Right ventricle myocardium superior (tissue), 1 donor: ENCODE measurements at regions of chr1 and their contacts with region 1.

Region 1: DNA sequence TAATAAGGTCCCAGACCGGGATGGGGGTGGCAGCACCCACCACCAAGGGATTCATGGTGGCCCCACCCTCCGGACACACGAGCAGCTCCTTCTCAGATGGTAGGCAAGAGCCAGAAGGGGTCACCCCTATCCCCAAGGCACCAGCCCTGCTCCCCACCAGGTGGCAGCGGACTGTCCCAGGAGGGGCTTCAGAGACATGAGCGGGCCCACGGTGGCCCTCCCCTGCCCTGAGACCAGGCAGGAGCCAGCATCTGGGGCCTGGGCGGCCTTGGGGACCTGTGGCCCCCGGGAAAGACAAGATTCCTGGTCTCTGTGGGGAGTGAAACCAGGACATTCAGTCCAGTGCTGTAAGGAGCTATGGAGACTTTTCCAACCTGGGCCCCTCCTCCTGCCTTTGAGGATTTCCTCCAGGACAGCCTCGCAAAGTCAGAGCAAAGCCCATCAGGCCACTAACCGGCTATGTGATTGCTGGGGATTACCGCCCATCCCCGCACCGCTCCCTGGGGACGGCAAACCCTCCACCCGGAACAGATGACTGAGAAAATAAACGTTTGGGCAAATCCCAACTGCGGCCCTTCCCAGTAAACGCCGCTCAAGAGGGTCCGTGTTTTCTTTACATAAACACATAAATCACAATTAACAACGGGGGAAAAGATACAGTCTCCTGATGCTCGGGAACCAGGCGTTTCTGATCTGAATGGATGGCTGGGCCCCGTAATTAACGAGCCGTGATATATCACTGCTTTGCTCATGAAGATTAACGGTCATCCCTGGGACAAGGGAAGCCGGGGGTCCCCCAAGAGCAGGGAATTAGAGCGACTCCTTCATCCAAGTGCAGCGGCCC is 50.9 kb upstream of the ARHGEF16 start:
- DNase-seq: no peak
- ATAC-seq: no peak

Region 2: GRCh38 chr1:3283849-3284248 is 119.8 kb before region 1 on chr1:
- intact Hi-C with region 1: loop called (anchors 10 kb)
- DNase-seq: peak; percentile 68
- ATAC-seq: peak; percentile 86

Region 3: DNA sequence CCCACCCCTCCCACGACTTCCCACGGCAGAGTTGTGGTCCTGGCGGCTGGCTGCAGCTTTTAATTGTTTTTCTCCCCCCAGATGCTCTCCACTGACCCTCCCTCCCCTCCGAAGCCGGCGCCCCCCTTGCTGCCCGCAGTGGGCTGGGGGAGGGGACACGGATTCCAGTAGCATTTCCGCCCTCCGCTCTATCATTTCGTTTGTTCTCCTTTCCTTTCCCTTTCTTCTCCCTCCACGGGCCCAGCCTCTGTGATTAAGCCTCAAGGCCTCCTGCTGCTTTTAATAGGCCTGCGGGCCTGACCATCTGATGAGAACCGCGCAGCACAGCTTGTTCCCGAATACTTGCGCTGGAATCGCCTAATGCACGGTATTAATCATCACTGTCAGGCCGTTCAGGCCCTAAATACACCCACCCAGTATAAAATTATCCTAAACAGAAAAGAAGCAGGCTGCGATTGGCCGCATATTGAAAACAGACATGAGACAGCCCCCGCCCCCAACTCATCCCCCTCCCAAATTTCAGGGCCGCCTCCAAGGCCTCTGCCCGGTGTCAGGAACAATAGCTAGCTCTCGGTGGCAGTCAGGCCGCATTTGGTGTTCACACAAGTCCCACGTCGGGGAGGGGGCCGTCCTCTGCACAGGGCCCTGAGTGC is 51.2 kb before region 1 on chr1:
- intact Hi-C with region 1: loop called (anchors 5 kb)
- DNase-seq: no peak
- ATAC-seq: no peak